Dorsolateral prefrontal cortex (tissue), 120 donors: ENCODE measurements at regions of chr5 and their contacts with region 1.

Region 1: GRCh38 chr5:154647114-154647760 is 107.9 kb upstream of the LARP1 start:
- DNase-seq: peak in 2 of 10 donors; percentile 4 to 43
- H3K4me3 ChIP-seq: peak overlapping the region in 58 of 59 donors; percentile 1 to 71 (median 48)
- H3K27ac ChIP-seq: no peak overlapping the region
- H3K27me3 ChIP-seq: peaks cover 0 to 2% (median 0%) of the 10 kb centered on the region in 45 donors
- CTCF ChIP-seq: no peak

Region 2: DNA sequence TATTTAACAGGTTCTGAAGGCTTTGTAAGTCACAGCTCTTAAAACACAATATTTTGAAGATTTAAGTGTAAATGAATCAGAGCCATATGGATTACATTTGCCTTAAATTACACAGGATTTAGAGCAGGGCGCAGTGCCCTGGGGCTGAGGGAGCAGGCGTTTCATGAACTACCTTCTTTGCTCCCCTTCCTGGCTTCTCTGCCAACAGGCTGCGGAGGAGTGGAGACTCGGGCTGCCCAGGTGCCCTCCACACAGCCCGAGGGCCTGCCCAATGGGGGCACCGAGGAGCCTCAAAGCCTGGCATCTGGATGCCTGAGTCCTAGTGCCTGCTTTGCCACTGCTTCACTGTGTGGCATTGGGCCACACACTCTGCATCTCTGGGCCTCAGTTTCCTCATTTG is 78.6 kb before region 1 on chr5:
- intact Hi-C with region 1: no loop called
- DNase-seq: no peak
- H3K4me3 ChIP-seq: no peak overlapping the region
- H3K27ac ChIP-seq: no peak overlapping the region
- H3K27me3 ChIP-seq: peaks cover 0 to 17% (median 0%) of the 10 kb centered on the region in 45 donors
- CTCF ChIP-seq: no peak

Region 3: DNA sequence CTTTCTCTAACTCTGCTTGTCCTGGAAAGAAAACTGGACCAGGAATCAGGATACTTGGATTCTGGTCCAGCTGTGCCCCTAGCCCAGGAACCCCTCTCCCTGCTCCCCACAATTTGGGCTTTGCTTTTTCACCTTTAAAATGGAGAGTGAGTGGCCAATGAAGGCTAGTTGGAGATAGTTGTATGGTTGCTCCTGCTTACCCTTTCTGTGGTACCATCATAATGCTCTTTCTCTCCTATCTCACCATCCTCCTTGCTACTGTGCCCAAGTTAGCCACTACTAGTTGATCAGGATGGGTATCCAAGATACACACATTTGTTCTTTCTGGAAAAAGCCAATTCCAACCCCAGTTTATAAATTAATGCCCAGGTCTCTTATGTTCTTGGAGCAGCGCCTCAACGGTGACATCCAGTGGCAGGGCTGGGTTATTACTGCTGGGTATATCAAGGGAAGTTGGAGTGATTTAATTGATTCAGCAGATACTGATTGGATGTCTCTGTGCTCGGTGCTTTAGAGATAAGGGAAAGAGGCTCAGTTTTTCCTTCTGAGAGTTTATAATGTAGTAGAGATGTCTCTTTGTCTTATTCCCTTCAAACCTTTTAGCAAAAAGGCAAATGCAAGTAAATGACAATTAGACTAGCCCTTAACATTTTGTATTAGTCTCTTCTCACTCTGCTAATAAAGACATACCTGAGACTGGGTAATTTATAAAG is 164.6 kb after region 1 on chr5:
- intact Hi-C with region 1: loop called (anchors 2 to 5 kb)
- DNase-seq: peak in 9 of 10 donors; percentile 22 to 67 (median 50)
- H3K4me3 ChIP-seq: no peak overlapping the region
- H3K27ac ChIP-seq: peak overlapping the region in 14 of 59 donors; percentile 7 to 51 (median 25)
- H3K27me3 ChIP-seq: no peaks in the 10 kb centered on the region
- CTCF ChIP-seq: peak; percentile 69 to 92 (median 83)